ENCODE measurements at regions of chr20 and their contacts with region 1.

Region 1: GRCh38 chr20:20561841-20562240 is 150.6 kb downstream of the RALGAPA2 start:
- DNase-seq: no peak
- CTCF ChIP-seq: no peak

Region 2: DNA sequence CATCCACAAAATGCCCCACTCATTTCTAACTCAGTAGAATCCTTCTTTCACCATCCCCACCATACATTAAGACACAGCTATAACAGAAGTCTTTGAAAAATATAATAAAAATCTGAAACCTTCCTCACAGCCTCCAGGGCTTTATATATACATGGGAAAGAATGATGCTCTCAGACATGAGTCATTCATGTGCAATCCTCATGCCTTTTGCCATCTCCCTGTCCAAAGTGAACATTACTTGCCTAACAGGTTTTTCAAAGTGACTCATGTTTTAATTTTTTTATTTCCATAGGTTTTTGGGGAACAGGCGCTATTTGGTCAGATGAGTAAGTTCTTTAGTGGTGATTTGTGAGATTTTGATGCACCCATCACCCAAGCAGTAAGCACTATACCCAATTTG is 12.1 kb before region 1 on chr20:
- CTCF ChIA-PET with region 1: interaction called, 16 read pairs
- POLR2A ChIA-PET with region 1: no interaction called
- DNase-seq: no peak
- CTCF ChIP-seq: no peak

Region 3: DNA sequence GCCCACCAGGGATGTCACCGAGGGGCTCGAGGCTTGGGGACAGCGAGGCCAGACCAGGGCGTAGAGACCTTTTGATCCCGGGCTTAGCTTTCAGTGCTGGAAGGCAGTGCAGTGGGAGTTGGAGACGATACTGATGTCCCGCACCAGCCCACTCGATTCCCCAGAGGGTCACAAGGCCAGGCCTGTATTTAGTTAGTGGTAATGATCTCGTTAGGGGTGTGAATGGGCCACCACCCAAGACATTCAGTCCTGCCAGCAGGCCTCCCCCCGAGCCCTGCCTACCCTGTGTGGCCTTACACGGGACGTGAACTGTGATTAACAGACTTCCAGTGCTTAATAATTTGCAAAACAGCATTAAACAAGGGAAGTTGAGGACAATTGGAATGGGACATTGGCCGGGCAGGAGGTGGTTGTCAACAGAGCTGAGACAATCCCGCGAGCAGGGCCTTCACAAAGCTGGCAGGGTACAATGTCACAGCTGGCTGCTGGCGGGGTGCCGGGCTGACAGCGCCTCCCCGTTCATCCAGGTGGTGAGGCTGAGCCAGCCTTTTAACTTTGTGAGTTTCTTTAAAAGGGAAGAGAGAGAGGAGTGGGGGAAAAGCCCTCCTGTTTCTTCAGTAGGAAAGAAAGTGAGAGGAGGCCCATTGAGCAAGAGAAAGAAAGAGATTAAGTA is 325.9 kb after region 1 on chr20:
- CTCF ChIA-PET with region 1: no interaction called
- POLR2A ChIA-PET with region 1: no interaction called
- DNase-seq: no peak
- CTCF ChIP-seq: no peak

Measured in GM10248 (cell line).